Activated CD8-positive, alpha-beta T cell treated with anti-CD3 and anti-CD28 coated beads, Interleukin-2, amount 10 ng/mL, durations not matched to agents 7 days and 5 days (primary cell): ENCODE measurements at regions of chr11 and their contacts with region 1.

Region 1: DNA sequence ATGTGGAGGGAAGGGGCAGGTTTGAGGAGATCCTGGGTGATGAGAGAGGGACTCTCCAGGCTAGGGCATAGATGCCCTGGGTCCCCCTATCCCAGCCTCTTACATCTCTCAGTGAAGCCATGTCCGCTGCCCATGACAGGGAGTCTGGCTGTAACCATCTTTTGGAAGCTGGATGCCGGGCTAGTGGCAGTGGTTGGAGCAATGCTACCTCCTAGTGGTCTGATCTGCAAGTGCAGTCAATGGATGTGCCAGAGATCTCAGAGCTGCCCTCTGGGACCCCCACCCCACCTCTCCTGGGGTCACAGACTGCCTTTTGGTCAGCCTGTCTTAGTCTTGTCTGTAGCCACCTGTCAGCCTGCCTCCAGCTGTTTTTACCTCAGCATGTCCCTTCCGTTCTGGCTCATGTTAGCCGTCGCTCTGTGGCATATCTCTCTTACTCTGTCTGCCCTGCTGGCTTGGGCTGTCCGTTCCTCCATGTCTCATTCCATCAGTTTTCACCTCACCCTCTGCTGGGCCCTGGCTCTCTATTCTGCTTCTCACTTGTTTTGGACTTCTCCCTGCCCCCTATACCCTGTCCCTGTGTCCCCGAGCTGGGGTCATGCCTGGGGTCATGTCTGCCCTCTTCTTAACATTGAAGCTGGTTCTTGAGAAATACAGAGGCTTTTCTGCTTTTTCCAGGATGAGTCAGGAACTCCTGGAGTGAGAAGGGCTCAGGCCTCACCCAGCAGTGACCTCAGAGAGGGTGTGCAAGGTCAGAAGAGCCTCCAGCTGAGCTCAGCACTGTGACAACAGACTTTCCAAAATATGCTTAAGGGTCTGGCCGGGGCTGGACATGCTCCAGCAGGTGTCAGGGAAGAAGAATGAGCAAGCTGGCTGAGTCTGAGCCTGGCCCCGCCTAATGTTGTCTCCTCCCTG is 52.0 kb upstream of the THY1 start:
- DNase-seq: peak; percentile 63
- ATAC-seq: peak; percentile 59
- H3K4me3 Mint-ChIP-seq: no peak overlapping the region
- H3K27ac Mint-ChIP-seq: no peak overlapping the region
- H3K4me1 Mint-ChIP-seq: no peaks in the 10 kb centered on the region
- H3K27me3 Mint-ChIP-seq: peaks cover 4% of the 10 kb centered on the region

Region 2: GRCh38 chr11:119381181-119381988 is 93.6 kb before region 1 on chr11 and contains the start of gene USP2:
- CTCF ChIA-PET with region 1: interaction called, 12 read pairs
- POLR2A ChIA-PET with region 1: no interaction called
- DNase-seq: peak; percentile 96
- ATAC-seq: peak; percentile 98
- H3K4me3 Mint-ChIP-seq: no peak within 1 kb of the TSS
- H3K27ac Mint-ChIP-seq: peak within 1 kb of the TSS; percentile 71
- H3K4me1 Mint-ChIP-seq: peaks cover 12% of the 10 kb centered on the region
- H3K27me3 Mint-ChIP-seq: peaks cover 9% of the 10 kb centered on the region
- total RNA-seq, gene USP2: 0.55 to 0.68 TPM